ENCODE measurements at regions of chr6 and their contacts with region 1.

Region 1: DNA sequence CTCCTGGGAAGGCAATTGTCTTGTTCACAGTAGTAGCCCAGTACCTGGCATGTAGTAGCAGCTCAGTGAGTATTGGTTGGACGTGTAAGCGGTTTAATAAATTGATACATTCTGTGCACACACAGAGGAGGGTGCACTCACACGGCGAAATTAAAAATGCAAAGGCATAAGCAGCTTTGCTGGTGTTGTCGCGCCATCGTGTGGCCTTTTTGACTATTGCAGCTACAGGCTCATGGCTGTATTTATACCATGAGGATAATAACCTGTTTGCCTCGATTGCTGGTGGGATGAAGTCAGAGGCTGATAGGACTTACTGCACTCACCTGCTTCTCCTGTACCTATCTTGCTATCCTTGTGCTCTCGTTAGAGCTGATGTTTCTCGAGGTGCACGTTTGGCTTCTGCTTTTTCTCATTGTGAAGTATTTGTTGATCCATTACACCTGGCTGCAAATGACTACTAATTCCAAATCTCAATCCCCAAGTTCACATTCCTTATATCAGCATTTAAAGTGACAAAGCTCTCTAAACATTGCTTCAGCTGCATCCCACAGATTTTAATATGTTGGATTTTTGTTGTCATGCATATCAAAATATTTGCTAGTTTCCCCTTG is 61.5 kb downstream of the TBXT start:
- DNase-seq: peak; percentile 14
- H3K4me3 ChIP-seq: no peak overlapping the region
- H3K27ac ChIP-seq: no peak overlapping the region
- H3K4me1 ChIP-seq: no peaks in the 10 kb centered on the region
- H3K27me3 ChIP-seq: no peaks in the 10 kb centered on the region
- CTCF ChIP-seq: peak; percentile 73 to 84

Region 2: DNA sequence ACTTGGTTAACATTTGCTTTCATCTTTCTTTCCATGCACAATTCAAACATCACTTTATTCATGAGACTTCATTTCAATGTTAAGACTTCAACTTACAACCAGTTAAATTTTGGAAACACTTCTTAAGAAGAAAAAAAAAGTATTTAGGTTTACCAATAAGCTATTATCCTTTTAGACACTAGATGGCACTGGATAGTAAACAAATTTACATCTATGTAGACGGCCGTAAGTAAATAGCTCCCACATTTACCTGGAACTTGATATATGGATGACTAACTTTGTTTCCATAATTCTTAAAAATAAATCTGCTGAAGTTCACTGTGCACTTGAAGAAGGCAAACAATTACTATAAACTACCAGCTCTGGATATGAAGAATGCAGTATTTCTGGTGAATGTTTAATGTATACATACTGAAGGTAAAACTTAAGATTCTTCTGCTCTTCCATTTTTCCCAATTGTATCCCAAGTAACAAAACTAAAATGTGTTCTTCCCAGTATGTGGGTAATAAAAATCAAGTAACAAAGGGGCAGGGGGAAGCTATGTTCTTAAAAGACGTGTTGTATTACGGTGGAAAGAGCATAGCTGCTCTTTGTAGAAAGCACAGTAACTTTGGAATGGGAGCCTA is 666.1 kb before region 1 on chr6:
- CTCF ChIA-PET with region 1: no interaction called
- dilution Hi-C with region 1: no loop called
- in situ Hi-C with region 1: no loop called
- intact Hi-C with region 1: loop called (anchors 1 kb)
- DNase-seq: peak; percentile 8
- H3K4me3 ChIP-seq: no peak overlapping the region
- H3K27ac ChIP-seq: no peak overlapping the region
- H3K4me1 ChIP-seq: no peaks in the 10 kb centered on the region
- H3K27me3 ChIP-seq: no peaks in the 10 kb centered on the region
- CTCF ChIP-seq: peak; percentile 41 to 49

Region 3: DNA sequence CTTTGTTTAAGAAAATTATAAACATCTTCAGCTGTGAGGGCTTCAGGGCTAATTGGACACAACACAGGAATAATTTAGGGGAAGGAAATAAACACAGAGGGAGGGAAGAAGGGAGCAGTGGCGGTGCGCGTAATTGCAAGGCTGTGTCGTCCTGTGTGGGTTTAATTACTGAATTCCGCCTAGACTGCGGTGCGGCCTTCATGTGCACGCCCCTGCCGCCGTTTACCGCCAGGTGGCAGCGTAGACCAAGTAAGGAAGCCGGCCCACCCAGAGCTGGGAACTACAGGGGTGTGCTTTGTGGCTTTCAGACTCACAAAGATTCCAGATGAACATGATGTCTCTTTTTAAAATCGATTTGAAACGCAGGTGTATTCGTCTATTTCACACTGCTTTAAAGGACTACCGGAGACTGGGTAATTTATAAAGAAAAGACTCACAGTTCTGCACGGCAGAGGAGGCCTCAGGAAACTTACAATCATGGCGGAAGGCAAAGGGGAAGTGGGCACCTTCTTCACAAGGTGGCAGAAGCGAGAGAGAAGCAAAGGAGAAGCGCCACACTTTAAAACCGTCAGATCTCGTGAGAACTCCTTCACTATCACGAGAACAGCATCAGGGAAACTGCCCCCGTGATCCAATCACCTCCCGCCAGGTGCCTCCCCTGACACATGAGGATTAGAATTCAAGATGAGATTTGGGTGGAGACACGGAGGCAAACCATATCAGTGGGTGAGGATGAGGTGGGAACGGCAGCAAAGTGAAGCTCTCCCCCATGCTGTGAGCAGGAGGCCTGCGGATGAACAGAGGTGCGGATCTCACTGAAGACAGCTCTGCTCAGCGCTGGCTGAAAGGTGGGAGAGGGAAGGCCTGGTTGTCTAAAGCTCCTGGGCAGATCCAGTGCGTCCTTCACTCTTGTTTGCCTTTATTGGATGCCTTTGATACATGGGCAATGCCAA is 221.1 kb before region 1 on chr6:
- CTCF ChIA-PET with region 1: no interaction called
- dilution Hi-C with region 1: no loop called
- in situ Hi-C with region 1: no loop called
- intact Hi-C with region 1: loop called (anchors 1 kb)
- DNase-seq: no peak
- H3K4me3 ChIP-seq: no peak overlapping the region
- H3K27ac ChIP-seq: no peak overlapping the region
- H3K4me1 ChIP-seq: no peaks in the 10 kb centered on the region
- H3K27me3 ChIP-seq: no peaks in the 10 kb centered on the region
- CTCF ChIP-seq: peak; percentile 49

Region 4: DNA sequence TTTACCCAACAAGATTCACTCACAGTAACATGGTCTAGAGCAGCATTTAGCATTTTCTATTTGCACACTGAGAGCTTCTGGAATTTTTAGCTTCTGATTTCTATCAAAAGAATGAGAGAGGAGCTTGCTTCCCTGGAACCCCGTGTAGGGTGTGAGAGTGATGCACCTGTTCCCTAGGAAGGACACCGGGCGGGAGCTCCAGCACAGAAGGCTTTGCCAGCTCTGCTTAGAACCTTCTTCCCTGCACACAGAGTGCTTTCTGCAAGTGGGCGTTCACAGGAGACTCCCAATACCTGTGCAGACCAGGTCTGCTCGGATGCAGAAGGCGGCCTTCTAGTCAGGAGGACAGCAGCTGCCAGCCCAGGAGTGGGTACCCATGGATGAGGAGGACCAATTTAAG is 155.9 kb before region 1 on chr6:
- CTCF ChIA-PET with region 1: no interaction called
- dilution Hi-C with region 1: no loop called
- in situ Hi-C with region 1: no loop called
- intact Hi-C with region 1: no loop called
- DNase-seq: no peak
- H3K4me3 ChIP-seq: no peak overlapping the region
- H3K27ac ChIP-seq: no peak overlapping the region
- H3K4me1 ChIP-seq: no peaks in the 10 kb centered on the region
- H3K27me3 ChIP-seq: no peaks in the 10 kb centered on the region
- CTCF ChIP-seq: no peak

Region 5: GRCh38 chr6:166127624-166128472 is 21.7 kb after region 1 on chr6:
- CTCF ChIA-PET with region 1: no interaction called
- dilution Hi-C with region 1: no loop called
- in situ Hi-C with region 1: no loop called
- intact Hi-C with region 1: no loop called
- DNase-seq: no peak
- H3K4me3 ChIP-seq: no peak overlapping the region
- H3K27ac ChIP-seq: no peak overlapping the region
- H3K4me1 ChIP-seq: no peaks in the 10 kb centered on the region
- H3K27me3 ChIP-seq: no peaks in the 10 kb centered on the region
- CTCF ChIP-seq: no peak

Region 6: GRCh38 chr6:166402582-166403277 is 296.5 kb after region 1 on chr6:
- CTCF ChIA-PET with region 1: no interaction called
- dilution Hi-C with region 1: no loop called
- in situ Hi-C with region 1: no loop called
- intact Hi-C with region 1: loop called (anchors 5 kb)
- DNase-seq: peak; percentile 16
- H3K4me3 ChIP-seq: no peak overlapping the region
- H3K27ac ChIP-seq: no peak overlapping the region
- H3K4me1 ChIP-seq: peaks cover 3% of the 10 kb centered on the region
- H3K27me3 ChIP-seq: no peaks in the 10 kb centered on the region
- CTCF ChIP-seq: no peak